Naive thymus-derived CD8-positive, alpha-beta T cell (primary cell): ENCODE measurements at regions of chr12 and their contacts with region 1.

Region 1: GRCh38 chr12:110501752-110502738 is at the starts of genes RAD9B and VPS29:
- DNase-seq: peak; percentile 96 to 100 (median 99)
- ATAC-seq: peak; percentile 92 to 95
- H3K4me3 Mint-ChIP-seq: peak within 1 kb of the TSS; percentile 94 to 99 (median 96)
- H3K27ac Mint-ChIP-seq: peak within 1 kb of the TSS; percentile 92 to 99 (median 97)
- H3K4me1 Mint-ChIP-seq: peaks cover 16 to 45% (median 39%) of the 10 kb centered on the region in 4 donors
- H3K27me3 Mint-ChIP-seq: peaks cover 0 to 3% (median 0%) of the 10 kb centered on the region in 5 donors
- polyA plus RNA-seq, gene RAD9B: 0.89 to 1.3 (median 1.0) TPM
- polyA plus RNA-seq, gene VPS29: 128 to 167 (median 167) TPM

Region 2: DNA sequence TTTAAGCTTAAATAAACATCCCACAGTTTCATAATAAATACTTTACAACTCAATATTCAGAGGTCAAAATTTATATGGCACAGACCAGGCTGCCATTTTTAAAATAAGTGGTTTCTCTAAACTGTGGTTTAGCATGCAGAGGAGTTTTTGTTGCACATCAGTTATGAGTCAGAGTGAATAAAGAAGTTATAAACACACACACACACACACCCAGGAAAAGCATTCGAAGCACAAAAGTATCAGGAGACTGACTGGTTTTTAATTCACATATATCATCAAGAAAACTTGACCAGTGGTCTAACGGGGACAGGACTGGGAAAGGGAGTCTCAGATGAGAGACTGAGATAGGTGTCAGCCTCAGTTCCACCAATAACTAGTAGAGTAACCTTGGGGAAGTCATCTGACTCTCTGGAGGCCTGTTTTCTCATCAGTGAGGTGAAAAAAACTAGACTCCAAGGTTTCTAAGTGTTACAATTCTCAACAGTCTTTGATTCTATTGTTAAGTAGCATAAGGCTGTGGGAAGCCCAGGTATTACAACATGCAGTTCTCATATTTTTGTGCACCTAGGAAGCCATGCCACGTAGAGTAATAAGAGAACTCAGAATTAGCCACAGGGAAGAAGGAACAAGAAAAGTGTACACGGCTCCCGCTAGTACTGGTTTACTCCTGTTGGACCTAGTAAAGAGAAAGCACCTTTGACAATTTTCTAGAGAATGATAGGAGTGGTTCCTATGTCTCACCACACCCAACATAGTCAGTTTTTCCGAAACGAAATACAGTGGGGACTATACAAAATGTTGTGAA is 75.9 kb after region 1 on chr12:
- POLR2A ChIA-PET with region 1: no interaction called
- DNase-seq: peak in 2 of 10 donors; percentile 6 to 30
- ATAC-seq: peak; percentile 24 to 38
- H3K4me3 Mint-ChIP-seq: peak overlapping the region; percentile 44 to 97 (median 93)
- H3K27ac Mint-ChIP-seq: peak overlapping the region; percentile 53 to 95 (median 88)
- H3K4me1 Mint-ChIP-seq: peaks cover 24 to 85% (median 69%) of the 10 kb centered on the region in 4 donors
- H3K27me3 Mint-ChIP-seq: no peaks in the 10 kb centered on the region

Region 3: GRCh38 chr12:110606253-110606611 is 104.2 kb after region 1 on chr12:
- POLR2A ChIA-PET with region 1: interaction called, 15 read pairs
- DNase-seq: no peak
- ATAC-seq: no peak
- H3K4me3 Mint-ChIP-seq: peak overlapping the region; percentile 77 to 94 (median 86)
- H3K27ac Mint-ChIP-seq: peak overlapping the region; percentile 88 to 98 (median 93)
- H3K4me1 Mint-ChIP-seq: peaks cover 0 to 51% (median 8%) of the 10 kb centered on the region in 4 donors
- H3K27me3 Mint-ChIP-seq: no peaks in the 10 kb centered on the region

Region 4: DNA sequence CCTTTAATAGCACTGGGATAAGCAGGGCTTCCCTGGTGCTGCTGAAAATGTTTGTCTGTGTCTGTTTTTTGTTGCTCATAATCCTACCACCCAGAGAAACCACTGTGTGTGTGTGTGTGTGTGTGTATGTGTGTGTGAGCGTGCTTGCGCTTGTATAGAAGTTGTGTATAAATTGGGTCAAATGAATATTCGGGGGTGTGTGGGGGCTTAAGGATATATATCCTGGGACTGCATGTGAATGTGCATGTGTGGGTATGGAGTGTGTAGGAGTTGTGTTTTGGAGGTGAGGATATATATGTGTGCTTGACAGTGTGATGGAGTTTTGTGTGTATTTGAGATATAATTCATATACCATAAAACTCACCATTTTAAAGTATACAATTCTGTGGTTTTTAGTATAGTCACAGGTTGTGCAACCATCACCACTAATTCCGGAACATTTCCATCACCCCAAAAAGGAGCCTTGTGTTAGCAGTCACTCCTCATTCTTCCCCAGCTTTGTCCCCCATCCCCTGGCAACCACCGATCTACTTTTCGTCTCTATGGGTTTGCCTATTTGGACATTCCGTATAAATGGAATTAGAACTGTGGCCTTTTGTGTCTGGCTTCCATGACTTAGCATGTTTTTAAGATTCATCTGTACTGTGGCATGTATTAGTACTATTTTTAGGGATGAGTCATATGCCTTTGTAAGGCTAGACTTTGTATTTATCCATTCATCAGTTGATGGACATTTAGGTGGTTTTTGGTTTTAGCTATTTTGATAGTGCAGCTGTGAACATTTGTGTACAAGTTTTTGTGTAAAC is 137.5 kb after region 1 on chr12:
- POLR2A ChIA-PET with region 1: no interaction called
- DNase-seq: no peak
- ATAC-seq: no peak
- H3K4me3 Mint-ChIP-seq: no peak overlapping the region
- H3K27ac Mint-ChIP-seq: peak overlapping the region in 1 of 10 donors; percentile 37
- H3K4me1 Mint-ChIP-seq: peaks cover 29 to 84% (median 39%) of the 10 kb centered on the region in 4 donors
- H3K27me3 Mint-ChIP-seq: no peaks in the 10 kb centered on the region